PC-9 (cell line): ENCODE measurements at regions of chr10 and their contacts with region 1.

Region 1: GRCh38 chr10:50561816-50562215 is 61.9 kb downstream of the SGMS1 start:
- DNase-seq: peak in 1 of 2 experiments; percentile 55
- H3K4me3 ChIP-seq: no peak overlapping the region
- H3K27ac ChIP-seq: no peak overlapping the region
- H3K4me1 ChIP-seq: peaks cover 15% of the 10 kb centered on the region
- H3K27me3 ChIP-seq: no peaks in the 10 kb centered on the region
- CTCF ChIP-seq: peak; percentile 84

Region 2: DNA sequence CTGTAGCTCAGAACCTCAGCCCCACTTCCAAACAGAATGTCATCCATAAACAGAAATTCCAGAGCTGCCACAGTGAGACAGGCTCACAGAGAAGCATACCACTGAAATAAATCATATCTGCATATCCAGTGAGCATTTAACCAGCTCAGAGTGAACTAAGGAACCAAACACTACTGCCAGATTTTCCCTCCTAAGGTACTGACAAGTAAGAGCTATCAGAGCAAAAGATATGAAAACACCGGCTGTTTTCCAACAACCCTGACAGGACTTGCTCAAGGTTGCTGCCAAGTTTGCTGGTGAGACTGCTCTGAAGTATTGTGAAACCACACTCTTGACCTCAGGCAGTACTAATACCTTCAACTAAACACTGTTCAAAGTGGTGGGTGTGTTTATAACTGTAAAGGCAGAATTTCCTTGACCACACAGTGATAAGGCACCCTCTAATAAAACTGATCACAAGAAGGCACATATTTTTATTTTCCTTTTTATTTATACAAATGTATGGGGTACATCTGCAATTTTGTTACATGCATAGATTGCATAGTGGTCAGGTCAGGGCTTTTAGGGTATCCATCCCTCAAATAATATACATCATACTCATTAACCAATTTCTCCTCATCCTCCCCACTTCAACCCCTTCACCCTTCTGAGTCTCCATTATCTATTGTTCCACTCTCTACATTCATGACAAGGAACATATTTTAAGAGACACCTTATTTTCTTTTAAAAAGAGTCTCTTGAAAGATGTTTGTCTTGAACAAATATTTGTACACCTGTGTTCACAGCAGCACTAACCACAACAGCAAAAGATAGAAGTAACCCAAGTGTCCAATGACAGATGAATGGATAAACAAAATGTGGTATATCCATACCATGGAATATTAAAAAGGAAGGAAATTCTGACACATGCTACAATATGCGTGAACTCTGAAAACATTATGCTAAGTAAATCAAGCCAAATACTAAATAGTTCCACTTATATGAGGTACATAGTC is 43.8 kb after region 1 on chr10:
- CTCF ChIA-PET with region 1: no interaction called
- POLR2A ChIA-PET with region 1: no interaction called
- intact Hi-C with region 1: loop called (anchors 5 kb)
- DNase-seq: peak; percentile 60 to 92
- H3K4me3 ChIP-seq: no peak overlapping the region; the same call in 1 of the 2 replicates
- H3K27ac ChIP-seq: peak overlapping the region; percentile 53
- H3K4me1 ChIP-seq: peaks cover 45% of the 10 kb centered on the region
- H3K27me3 ChIP-seq: no peaks in the 10 kb centered on the region
- CTCF ChIP-seq: no peak

Region 3: GRCh38 chr10:50739618-50740292 is 177.9 kb after region 1 on chr10 and contains the start of gene ASAH2B:
- CTCF ChIA-PET with region 1: no interaction called
- POLR2A ChIA-PET with region 1: no interaction called
- intact Hi-C with region 1: loop called (anchors 10 kb)
- DNase-seq: peak; percentile 70 to 83
- H3K4me3 ChIP-seq: peak within 1 kb of the TSS; percentile 85
- H3K27ac ChIP-seq: peak within 1 kb of the TSS; percentile 17; the same call in 1 of the 2 replicates
- H3K4me1 ChIP-seq: peaks cover 5% of the 10 kb centered on the region
- H3K27me3 ChIP-seq: no peaks in the 10 kb centered on the region
- CTCF ChIP-seq: no peak
- total RNA-seq, gene ASAH2B: 3.8 TPM in 2 replicates